Dorsolateral prefrontal cortex (tissue), 120 donors: ENCODE measurements at regions of chr18 and their contacts with region 1.

Region 1: GRCh38 chr18:32470713-32471633 is at the start of gene GAREM1:
- DNase-seq: peak; percentile 88 to 97 (median 96)
- H3K4me3 ChIP-seq: peak within 1 kb of the TSS; percentile 67 to 95 (median 85)
- H3K27ac ChIP-seq: peak within 1 kb of the TSS in 58 of 59 donors; percentile 1 to 93 (median 86)
- H3K27me3 ChIP-seq: no peaks in the 10 kb centered on the region
- CTCF ChIP-seq: peak in 55 of 56 donors; percentile 56 to 96 (median 79)
- total RNA-seq, gene GAREM1: 16.7 to 42.4 (median 26.5) TPM

Region 2: DNA sequence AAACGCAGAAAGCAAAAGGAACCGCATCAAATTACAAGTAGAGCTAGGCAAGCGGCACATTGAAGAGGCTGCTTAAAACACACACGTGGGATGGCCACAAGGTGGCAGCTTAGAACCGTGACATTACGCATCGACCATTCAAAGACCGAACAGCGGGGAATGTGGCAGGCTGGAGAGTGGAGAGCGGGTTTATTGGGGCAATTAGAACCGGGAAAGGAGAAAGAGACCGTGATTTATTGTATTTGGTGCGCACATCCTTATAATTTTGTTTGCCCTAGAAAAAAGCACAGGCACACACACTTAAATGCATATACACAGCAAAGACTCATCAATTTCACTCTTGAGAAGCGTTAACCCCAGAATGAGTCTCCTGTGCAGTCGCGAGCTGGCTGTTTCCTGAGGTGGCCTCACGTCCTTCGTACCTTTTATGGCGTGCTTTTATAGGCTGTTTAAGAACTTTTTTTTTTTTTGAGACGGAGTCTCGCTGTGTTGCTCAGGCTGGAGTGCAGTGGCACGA is 312.8 kb before region 1 on chr18:
- intact Hi-C with region 1: loop called (anchors 2 kb)
- DNase-seq: peak; percentile 61 to 91 (median 84)
- H3K4me3 ChIP-seq: peak overlapping the region in 57 of 59 donors; percentile 4 to 64 (median 46)
- H3K27ac ChIP-seq: no peak overlapping the region
- H3K27me3 ChIP-seq: no peaks in the 10 kb centered on the region
- CTCF ChIP-seq: peak; percentile 70 to 97 (median 90)

Region 3: DNA sequence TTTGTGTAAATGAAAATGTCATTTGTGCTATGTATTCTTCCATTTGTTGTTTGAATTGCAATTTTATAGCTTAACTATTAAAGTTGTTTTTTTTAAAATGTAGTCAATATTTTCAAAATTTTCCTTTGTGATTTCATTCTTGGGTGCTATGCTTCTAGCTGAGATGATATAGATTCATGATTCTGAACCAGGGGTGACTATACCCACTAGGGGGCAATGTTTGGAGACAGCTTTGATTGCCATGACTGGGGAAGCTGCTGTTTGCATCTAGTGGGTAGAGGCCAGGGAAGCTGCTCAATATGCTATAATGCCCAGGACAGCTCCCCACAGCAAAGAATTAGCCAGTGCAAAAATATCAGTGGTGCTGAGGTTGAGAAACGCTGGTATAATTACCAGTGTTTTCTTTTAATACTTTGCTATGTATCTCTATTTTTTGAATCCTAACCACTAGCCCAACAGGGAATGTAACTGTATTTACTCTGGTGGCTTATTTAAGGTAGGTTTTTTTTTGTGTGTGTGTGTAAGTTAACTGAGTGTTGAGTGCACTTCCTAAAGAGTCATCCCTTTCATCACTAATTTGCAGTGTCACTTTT is 181.4 kb before region 1 on chr18:
- intact Hi-C with region 1: loop called (anchors 1 to 5 kb)
- DNase-seq: peak in 4 of 10 donors; percentile 39 to 52 (median 47)
- H3K4me3 ChIP-seq: no peak overlapping the region
- H3K27ac ChIP-seq: no peak overlapping the region
- H3K27me3 ChIP-seq: no peaks in the 10 kb centered on the region
- CTCF ChIP-seq: peak; percentile 28 to 85 (median 69)

Region 4: GRCh38 chr18:32349728-32350395 is 121.1 kb before region 1 on chr18:
- intact Hi-C with region 1: loop called in 1 of 2 experiments (anchors 10 kb)
- DNase-seq: peak in 4 of 10 donors; percentile 33 to 69 (median 50)
- H3K4me3 ChIP-seq: peak overlapping the region in 6 of 59 donors; percentile 3 to 21 (median 12)
- H3K27ac ChIP-seq: peak overlapping the region in 51 of 59 donors; percentile 3 to 80 (median 56)
- H3K27me3 ChIP-seq: no peaks in the 10 kb centered on the region
- CTCF ChIP-seq: no peak

Region 5: DNA sequence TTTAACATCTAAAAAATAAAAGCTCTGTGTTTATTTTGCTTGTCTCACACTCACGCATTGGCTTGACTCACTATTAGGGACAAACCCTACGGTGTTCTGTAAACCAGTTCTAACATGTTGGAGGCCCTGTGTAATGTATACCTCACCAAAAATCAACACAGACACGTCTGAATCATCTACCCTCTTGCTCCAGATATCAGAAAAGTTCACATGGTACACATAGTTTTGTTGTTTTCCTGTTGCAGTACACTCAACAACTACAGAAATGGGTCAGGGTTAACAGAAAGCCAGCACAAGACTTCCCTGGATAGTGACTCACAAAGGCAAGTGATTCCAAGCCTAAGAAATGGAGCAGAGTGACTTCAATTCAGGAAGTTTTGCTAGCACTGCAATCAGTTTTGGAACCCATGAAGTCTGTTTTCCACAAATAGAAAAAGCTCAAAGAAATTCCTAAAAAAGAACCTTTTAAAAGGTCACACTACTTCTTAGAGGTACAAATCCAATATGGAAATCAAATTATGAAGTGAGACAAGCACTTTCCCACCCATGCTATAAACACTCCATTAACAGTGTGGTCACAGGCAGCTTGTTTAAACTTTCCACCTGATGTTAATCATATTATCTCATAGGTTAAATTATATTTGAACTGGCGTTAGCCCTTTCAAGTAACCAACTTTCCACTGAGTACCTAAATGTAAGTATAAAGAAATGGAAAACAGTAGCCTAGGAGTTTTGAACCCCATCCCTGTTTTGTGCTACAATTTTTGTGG is 87.7 kb before region 1 on chr18:
- intact Hi-C with region 1: no loop called
- DNase-seq: no peak
- H3K4me3 ChIP-seq: no peak overlapping the region
- H3K27ac ChIP-seq: peak overlapping the region in 29 of 59 donors; percentile 0 to 77 (median 37)
- H3K27me3 ChIP-seq: no peaks in the 10 kb centered on the region
- CTCF ChIP-seq: no peak

Region 6: GRCh38 chr18:32552421-32553030 is 81.6 kb after region 1 on chr18:
- intact Hi-C with region 1: loop called in 1 of 2 experiments (anchors 2 kb)
- DNase-seq: peak in 6 of 10 donors; percentile 26 to 64 (median 48)
- H3K4me3 ChIP-seq: no peak overlapping the region
- H3K27ac ChIP-seq: no peak overlapping the region
- H3K27me3 ChIP-seq: no peaks in the 10 kb centered on the region
- CTCF ChIP-seq: peak; percentile 54 to 90 (median 78)